AG04449 (cell line): ENCODE measurements at regions of chr15 and their contacts with region 1.

Region 1: GRCh38 chr15:74950078-74951000 is 6.2 kb downstream of the RPP25 start:
- DNase-seq: no peak
- H3K4me3 ChIP-seq: no peak overlapping the region
- CTCF ChIP-seq: peak; percentile 93

Region 2: GRCh38 chr15:74723754-74724334 is 226.5 kb before region 1 on chr15:
- CTCF ChIA-PET with region 1: no interaction called
- POLR2A ChIA-PET with region 1: no interaction called
- DNase-seq: no peak
- H3K4me3 ChIP-seq: no peak overlapping the region
- CTCF ChIP-seq: no peak

Region 3: DNA sequence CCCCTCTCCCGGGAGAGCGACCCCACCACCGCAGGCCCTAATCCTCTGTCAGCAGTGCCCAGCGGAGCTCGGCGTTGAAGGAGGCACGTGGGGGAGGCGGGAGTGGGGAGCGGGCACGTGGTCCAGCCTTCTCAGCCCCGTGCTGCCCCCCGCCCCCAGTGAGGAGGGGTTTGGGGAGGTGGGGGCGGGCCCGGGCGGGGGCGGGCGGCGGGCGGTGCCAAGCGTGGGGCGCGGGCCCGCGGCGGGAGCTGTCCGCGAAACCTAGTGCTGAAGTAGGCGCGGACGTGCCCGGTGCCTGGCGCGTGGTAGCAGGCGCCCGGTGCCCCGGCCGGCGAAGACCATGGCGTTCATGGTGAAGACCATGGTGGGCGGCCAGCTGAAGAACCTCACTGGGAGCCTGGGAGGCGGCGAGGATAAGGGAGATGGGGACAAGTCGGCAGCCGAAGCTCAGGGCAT is 123.9 kb before region 1 on chr15 and contains the start of gene CPLX3:
- CTCF ChIA-PET with region 1: no interaction called
- POLR2A ChIA-PET with region 1: no interaction called
- DNase-seq: no peak
- H3K4me3 ChIP-seq: no peak within 1 kb of the TSS
- CTCF ChIP-seq: no peak

Region 4: GRCh38 chr15:74937596-74938296 is 12.6 kb before region 1 on chr15 and contains the start of gene COX5A:
- CTCF ChIA-PET with region 1: interaction called, 34 read pairs
- POLR2A ChIA-PET with region 1: interaction called, 4 read pairs
- DNase-seq: peak; percentile 71
- H3K4me3 ChIP-seq: peak within 1 kb of the TSS; percentile 81
- CTCF ChIP-seq: no peak

Region 5: GRCh38 chr15:75112848-75113492 is 162.6 kb after region 1 on chr15:
- CTCF ChIA-PET with region 1: no interaction called
- POLR2A ChIA-PET with region 1: no interaction called
- DNase-seq: no peak
- H3K4me3 ChIP-seq: no peak overlapping the region
- CTCF ChIP-seq: no peak